GM10248 (cell line): ENCODE measurements at regions of chr9 and their contacts with region 1.

Region 1: GRCh38 chr9:124852829-124853531 is at the start of gene WDR38:
- DNase-seq: peak; percentile 89
- CTCF ChIP-seq: peak; percentile 97

Region 2: DNA sequence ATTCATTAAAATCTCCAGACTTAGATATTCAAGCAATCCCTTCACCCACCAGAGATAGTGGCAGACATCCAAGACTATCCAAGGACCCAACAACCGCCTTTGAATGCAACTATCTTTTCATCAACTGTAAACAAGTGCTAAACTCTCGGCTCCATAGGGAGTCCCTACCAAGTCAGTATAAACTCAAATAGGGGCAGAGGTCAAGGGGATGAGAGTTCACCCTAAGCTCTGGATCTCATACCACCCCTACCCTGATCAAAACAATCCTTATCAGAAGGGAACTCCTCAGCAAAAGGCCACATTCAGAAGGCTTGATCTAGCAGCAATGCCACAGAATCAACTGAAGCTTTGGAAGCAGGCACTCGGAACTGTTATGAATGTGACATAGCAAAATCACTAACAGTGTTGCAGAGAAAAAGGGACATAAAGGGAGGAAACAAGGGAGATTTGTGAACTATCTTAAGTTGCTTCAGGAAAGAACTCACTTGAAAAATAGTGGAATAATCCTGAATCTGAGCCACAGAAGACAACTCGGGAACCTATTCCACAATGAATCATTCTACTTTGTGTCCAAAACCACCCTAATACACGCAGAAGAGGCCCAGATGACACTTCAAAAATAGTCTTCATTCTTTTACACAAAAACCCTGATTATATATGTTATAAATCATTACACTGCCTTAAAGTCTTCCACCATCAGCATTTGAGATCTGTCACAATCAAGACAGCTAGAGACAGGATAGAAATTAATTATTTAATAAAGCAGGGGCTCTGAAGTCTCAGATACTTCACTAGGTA is 131.7 kb before region 1 on chr9:
- CTCF ChIA-PET with region 1: interaction called, 12 read pairs
- POLR2A ChIA-PET with region 1: no interaction called
- DNase-seq: no peak
- CTCF ChIP-seq: no peak

Region 3: DNA sequence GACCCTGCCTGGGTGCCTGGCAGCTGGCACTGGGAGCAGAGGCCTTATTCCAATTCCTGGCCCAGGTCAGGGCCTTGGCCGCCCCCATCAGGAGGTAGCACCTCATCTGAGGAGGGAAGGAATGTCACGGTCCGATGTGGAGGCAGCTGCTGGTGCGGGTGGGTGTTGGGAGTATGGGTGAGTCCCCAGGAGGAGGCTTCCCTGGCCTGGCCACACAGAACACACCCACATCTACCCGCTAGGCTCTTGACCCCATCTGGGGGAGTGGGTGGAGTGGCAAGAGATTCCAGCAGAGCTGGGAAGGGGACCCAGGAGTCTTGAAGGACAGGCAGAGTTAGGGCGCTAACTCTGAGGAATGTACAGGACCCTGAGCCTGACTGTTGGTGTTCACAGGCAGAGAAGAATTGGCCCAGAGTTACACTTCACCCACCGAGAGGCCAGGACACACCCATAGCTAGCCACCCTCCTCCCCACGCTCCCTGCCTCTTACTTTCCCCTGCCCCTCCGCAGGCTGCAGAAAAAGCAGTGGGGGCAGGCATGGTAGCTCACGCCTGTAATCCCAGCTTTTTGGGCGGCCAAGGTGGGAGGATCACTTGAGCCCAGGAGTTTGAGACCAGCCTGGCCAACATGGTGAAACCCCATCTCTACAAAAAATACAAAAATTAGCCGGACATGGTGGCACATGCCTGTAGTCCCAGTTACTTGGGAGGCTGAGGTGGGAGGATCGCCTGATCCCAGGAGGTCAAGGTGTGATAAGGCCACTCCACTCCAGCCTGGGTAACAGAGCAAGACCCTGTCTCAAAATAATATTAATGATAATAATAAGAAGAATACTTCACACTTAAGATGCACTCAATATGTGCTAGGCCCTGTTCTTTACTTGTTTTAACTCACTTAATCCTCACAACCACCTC is 70.1 kb before region 1 on chr9:
- CTCF ChIA-PET with region 1: interaction called, 814 read pairs
- POLR2A ChIA-PET with region 1: no interaction called
- DNase-seq: peak; percentile 9
- CTCF ChIP-seq: no peak

Region 4: GRCh38 chr9:124818431-124819281 is 34.3 kb before region 1 on chr9:
- CTCF ChIA-PET with region 1: interaction called, 36 read pairs
- POLR2A ChIA-PET with region 1: interaction called, 4 read pairs
- DNase-seq: no peak
- CTCF ChIP-seq: no peak

Region 5: GRCh38 chr9:124880501-124880900 is 27.5 kb after region 1 on chr9:
- CTCF ChIA-PET with region 1: interaction called, 173 read pairs
- POLR2A ChIA-PET with region 1: interaction called, 5 read pairs
- DNase-seq: no peak
- CTCF ChIP-seq: no peak

Region 6: DNA sequence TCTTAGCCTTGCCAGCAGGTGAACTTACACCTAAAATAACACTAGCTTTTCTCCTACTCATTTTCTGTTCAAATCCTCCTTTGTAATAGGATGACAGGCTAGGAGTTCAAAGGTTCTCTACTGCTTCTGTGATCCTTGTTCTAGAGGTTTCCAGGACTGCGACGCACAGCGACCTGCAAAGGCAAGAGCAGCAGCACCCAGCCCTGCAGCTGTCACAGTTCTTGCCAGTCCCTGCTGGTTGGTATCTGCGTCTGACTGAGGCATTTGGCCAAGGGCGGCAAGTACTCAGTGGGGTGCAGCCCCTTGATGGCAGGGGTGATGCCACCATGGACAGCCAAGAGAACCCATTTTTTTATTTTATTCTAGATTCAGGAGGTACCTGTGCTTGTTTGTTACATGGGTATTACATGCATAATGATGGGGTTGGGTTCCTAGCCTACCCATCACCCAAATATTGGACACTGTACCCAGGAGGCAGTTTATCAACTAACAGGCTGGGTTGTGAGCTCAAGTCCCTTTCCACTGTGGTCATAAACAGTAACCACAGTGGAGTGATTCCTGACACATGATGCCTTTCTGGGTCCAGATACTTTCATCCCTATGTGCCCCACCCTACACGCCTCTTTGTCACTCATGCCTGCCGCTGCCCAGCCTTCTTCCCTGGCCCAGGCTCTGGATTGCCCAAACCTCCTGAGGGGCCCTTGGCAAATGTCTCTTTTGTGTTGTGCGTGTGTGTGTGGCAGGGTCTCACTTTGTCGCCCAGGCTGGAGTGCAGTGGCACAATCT is 519.7 kb after region 1 on chr9:
- CTCF ChIA-PET with region 1: interaction called, 14 read pairs
- POLR2A ChIA-PET with region 1: no interaction called
- DNase-seq: no peak
- CTCF ChIP-seq: no peak